CD8-positive, alpha-beta T cell (primary cell): ENCODE measurements at regions of chr15 and their contacts with region 1.

Region 1: GRCh38 chr15:67120839-67121643 is 55.6 kb downstream of the SMAD3 start:
- DNase-seq: peak; percentile 75 to 96 (median 86)
- ATAC-seq: peak; percentile 88
- H3K4me3 ChIP-seq: peak overlapping the region; percentile 36 to 42
- H3K4me3 Mint-ChIP-seq: peak overlapping the region; percentile 81
- H3K27ac ChIP-seq: peak overlapping the region; percentile 58 to 95
- H3K27ac Mint-ChIP-seq: peak overlapping the region; percentile 93
- H3K4me1 ChIP-seq: peaks cover 43% of the 10 kb centered on the region
- H3K4me1 Mint-ChIP-seq: peaks cover 79% of the 10 kb centered on the region
- H3K27me3 ChIP-seq: no peaks in the 10 kb centered on the region
- H3K27me3 Mint-ChIP-seq: no peaks in the 10 kb centered on the region
- CTCF ChIP-seq: no peak

Region 2: GRCh38 chr15:66997212-66997611 is 123.8 kb before region 1 on chr15:
- CTCF ChIA-PET with region 1: no interaction called
- POLR2A ChIA-PET with region 1: no interaction called
- intact Hi-C with region 1: no loop called
- DNase-seq: no peak
- ATAC-seq: no peak
- H3K4me3 ChIP-seq: no peak overlapping the region
- H3K4me3 Mint-ChIP-seq: no peak overlapping the region
- H3K27ac ChIP-seq: no peak overlapping the region
- H3K27ac Mint-ChIP-seq: no peak overlapping the region
- H3K4me1 ChIP-seq: no peaks in the 10 kb centered on the region
- H3K4me1 Mint-ChIP-seq: no peaks in the 10 kb centered on the region
- H3K27me3 ChIP-seq: no peaks in the 10 kb centered on the region
- H3K27me3 Mint-ChIP-seq: peaks cover 1% of the 10 kb centered on the region
- CTCF ChIP-seq: no peak

Region 3: GRCh38 chr15:67065444-67066093 is 55.5 kb before region 1 on chr15 and contains the start of gene SMAD3:
- CTCF ChIA-PET with region 1: interaction called, 3 read pairs
- POLR2A ChIA-PET with region 1: interaction called, 6 read pairs
- intact Hi-C with region 1: loop called (anchors 5 kb)
- DNase-seq: peak; percentile 38 to 89 (median 71)
- ATAC-seq: peak; percentile 63
- H3K4me3 ChIP-seq: peak within 1 kb of the TSS; percentile 86 to 89
- H3K4me3 Mint-ChIP-seq: peak within 1 kb of the TSS; percentile 87
- H3K27ac ChIP-seq: peak within 1 kb of the TSS; percentile 44 to 51
- H3K27ac Mint-ChIP-seq: peak within 1 kb of the TSS; percentile 75
- H3K4me1 ChIP-seq: peaks cover 37% of the 10 kb centered on the region
- H3K4me1 Mint-ChIP-seq: peaks cover 49% of the 10 kb centered on the region
- H3K27me3 ChIP-seq: no peaks in the 10 kb centered on the region
- H3K27me3 Mint-ChIP-seq: no peaks in the 10 kb centered on the region
- CTCF ChIP-seq: no peak
- total RNA-seq, gene SMAD3: 25.4 to 29.0 TPM

Region 4: GRCh38 chr15:67091071-67091979 is 29.7 kb before region 1 on chr15:
- CTCF ChIA-PET with region 1: no interaction called
- POLR2A ChIA-PET with region 1: interaction called, 3 read pairs
- intact Hi-C with region 1: loop called in 1 of 2 experiments (anchors 2 kb)
- DNase-seq: peak in 8 of 9 experiments; percentile 55 to 90 (median 70)
- ATAC-seq: peak; percentile 80
- H3K4me3 ChIP-seq: peak overlapping the region in 1 of 2 experiments; percentile 6
- H3K4me3 Mint-ChIP-seq: peak overlapping the region; percentile 37
- H3K27ac ChIP-seq: peak overlapping the region in 1 of 2 experiments; percentile 66
- H3K27ac Mint-ChIP-seq: peak overlapping the region; percentile 71
- H3K4me1 ChIP-seq: peaks cover 29% of the 10 kb centered on the region
- H3K4me1 Mint-ChIP-seq: peaks cover 79% of the 10 kb centered on the region
- H3K27me3 ChIP-seq: no peaks in the 10 kb centered on the region
- H3K27me3 Mint-ChIP-seq: no peaks in the 10 kb centered on the region
- CTCF ChIP-seq: no peak

Region 5: GRCh38 chr15:67134067-67134838 is 13.2 kb after region 1 on chr15:
- CTCF ChIA-PET with region 1: interaction called, 10 read pairs
- POLR2A ChIA-PET with region 1: interaction called, 7 read pairs
- intact Hi-C with region 1: loop called (anchors 1 kb)
- DNase-seq: peak; percentile 37 to 93 (median 69)
- ATAC-seq: peak; percentile 95
- H3K4me3 ChIP-seq: peak overlapping the region; percentile 45 to 52
- H3K4me3 Mint-ChIP-seq: peak overlapping the region; percentile 84
- H3K27ac ChIP-seq: peak overlapping the region; percentile 80 to 96
- H3K27ac Mint-ChIP-seq: peak overlapping the region; percentile 99
- H3K4me1 ChIP-seq: peaks cover 43% of the 10 kb centered on the region
- H3K4me1 Mint-ChIP-seq: peaks cover 87% of the 10 kb centered on the region
- H3K27me3 ChIP-seq: no peaks in the 10 kb centered on the region
- H3K27me3 Mint-ChIP-seq: no peaks in the 10 kb centered on the region
- CTCF ChIP-seq: no peak

Region 6: GRCh38 chr15:67254238-67255175 is 133.5 kb after region 1 on chr15 and contains the starts of genes AAGAB and IQCH:
- CTCF ChIA-PET with region 1: no interaction called
- POLR2A ChIA-PET with region 1: no interaction called
- intact Hi-C with region 1: loop called in 1 of 2 experiments (anchors 10 kb)
- DNase-seq: peak; percentile 93 to 99 (median 97)
- ATAC-seq: peak; percentile 93
- H3K4me3 ChIP-seq: peak within 1 kb of the TSS; percentile 78 to 92
- H3K4me3 Mint-ChIP-seq: peak within 1 kb of the TSS; percentile 98
- H3K27ac ChIP-seq: peak within 1 kb of the TSS; percentile 79 to 86
- H3K27ac Mint-ChIP-seq: peak within 1 kb of the TSS; percentile 98
- H3K4me1 ChIP-seq: peaks cover 13% of the 10 kb centered on the region
- H3K4me1 Mint-ChIP-seq: peaks cover 44% of the 10 kb centered on the region
- H3K27me3 ChIP-seq: peaks cover 0 to 3% of the 10 kb centered on the region in 2 experiments
- H3K27me3 Mint-ChIP-seq: no peaks in the 10 kb centered on the region
- CTCF ChIP-seq: no peak
- total RNA-seq, gene AAGAB: 17.0 to 18.0 TPM
- total RNA-seq, gene IQCH: 0.39 to 0.60 TPM

Region 7: GRCh38 chr15:67372543-67372942 is 251.5 kb after region 1 on chr15:
- CTCF ChIA-PET with region 1: no interaction called
- POLR2A ChIA-PET with region 1: no interaction called
- intact Hi-C with region 1: no loop called
- DNase-seq: no peak
- ATAC-seq: no peak
- H3K4me3 ChIP-seq: no peak overlapping the region
- H3K4me3 Mint-ChIP-seq: no peak overlapping the region
- H3K27ac ChIP-seq: no peak overlapping the region
- H3K27ac Mint-ChIP-seq: no peak overlapping the region
- H3K4me1 ChIP-seq: no peaks in the 10 kb centered on the region
- H3K4me1 Mint-ChIP-seq: no peaks in the 10 kb centered on the region
- H3K27me3 ChIP-seq: no peaks in the 10 kb centered on the region
- H3K27me3 Mint-ChIP-seq: peaks cover 8% of the 10 kb centered on the region
- CTCF ChIP-seq: no peak